ENCODE measurements at regions of chr1 and their contacts with region 1.

Region 1: GRCh38 chr1:166007176-166007575 is 159.6 kb downstream of the FAM78B start:
- DNase-seq: no peak
- H3K4me3 ChIP-seq: no peak overlapping the region
- CTCF ChIP-seq: no peak
- POLR2A ChIP-seq: no peak

Region 2: GRCh38 chr1:166221316-166221715 is 214.1 kb after region 1 on chr1:
- intact Hi-C with region 1: loop called (anchors 5 kb)
- DNase-seq: no peak
- H3K4me3 ChIP-seq: no peak overlapping the region
- CTCF ChIP-seq: no peak
- POLR2A ChIP-seq: no peak